ENCODE measurements at regions of chr19 and their contacts with region 1.

Region 1: DNA sequence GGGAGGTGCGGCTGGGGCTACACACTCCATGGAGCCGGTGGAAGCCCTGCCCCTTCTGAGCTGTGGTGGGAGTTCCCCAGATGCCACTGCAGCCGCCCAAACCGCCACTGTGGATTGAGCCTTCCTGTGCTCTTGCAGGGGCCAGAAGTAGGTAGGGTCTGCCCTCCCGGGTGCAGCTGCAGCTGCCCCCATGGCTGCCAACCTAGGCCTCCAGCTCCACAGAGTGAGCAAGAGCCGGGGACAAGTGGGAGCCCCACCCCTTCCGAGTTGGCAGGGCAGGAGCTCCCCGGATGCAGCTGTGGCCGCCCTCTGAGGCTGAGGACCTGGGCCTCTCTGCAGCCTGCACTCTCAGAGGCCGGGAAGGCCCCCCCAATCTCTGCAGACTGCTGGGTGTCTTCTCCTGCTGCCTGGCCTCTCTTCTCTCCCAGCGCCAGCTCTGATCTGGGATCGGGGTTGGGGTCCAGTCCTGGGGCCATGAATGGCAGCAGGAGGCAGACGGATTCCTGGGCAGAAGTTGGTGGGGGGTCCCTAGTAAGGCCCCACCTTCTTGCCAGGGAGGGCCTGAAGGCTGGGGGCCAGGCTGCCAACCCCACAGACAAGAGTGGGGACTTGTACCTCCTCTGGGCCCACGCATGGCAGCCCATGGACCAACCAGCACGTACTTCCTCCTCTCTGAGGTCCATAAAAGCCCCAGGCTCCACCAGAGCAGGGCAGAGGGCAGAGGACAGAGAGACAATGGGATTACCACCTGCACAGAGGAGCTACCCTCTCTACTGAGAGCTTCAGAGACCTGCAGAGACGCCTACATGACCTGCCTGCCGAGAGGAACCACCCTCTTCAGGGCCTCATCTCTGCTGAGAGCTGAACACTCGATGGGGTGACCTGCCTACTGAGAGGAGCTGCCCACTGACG is 28.9 kb downstream of the AP2S1 start:
- DNase-seq: no peak
- ATAC-seq: no peak
- H3K4me3 ChIP-seq: no peak overlapping the region
- H3K27ac ChIP-seq: no peak overlapping the region
- H3K4me1 ChIP-seq: peaks cover 14% of the 10 kb centered on the region
- H3K27me3 ChIP-seq: no peaks in the 10 kb centered on the region
- CTCF ChIP-seq: no peak

Region 2: DNA sequence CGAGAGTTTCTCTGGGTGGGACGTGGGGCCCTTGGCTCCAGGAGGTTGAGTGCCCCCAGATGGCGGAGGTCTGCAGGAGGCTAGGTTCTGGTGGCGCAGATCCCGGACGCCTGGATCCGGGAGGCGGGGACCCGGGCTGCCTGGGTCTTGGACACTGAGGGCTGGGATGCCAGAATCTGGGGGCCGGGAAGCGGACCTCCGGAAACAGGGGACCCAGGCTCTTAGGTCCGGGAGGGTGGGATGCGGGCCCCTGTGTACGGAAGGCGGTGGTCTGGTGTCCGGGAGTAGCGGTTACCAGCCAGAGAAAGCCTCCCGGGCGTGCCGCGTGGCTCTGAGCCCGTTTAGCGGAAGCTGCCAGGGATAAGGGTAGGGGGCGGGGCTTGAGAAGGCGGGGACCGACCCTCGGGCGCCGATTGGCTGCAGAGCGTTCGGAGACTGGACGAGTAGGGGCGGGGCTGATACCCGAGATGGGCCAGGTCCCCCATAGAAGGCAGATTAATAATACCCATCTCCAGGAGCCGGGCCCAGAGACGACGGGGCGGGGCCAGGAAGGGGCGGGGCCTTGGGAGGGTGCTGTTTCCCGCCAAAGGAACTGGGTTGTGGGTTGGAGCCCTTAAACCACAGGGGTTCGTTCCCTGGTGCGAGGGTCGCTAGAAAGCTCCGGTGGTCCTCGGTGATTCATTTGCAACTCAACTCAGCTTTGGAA is 33.3 kb before region 1 on chr19 and contains the start of gene SLC1A5:
- CTCF ChIA-PET with region 1: no interaction called
- POLR2A ChIA-PET with region 1: no interaction called
- intact Hi-C with region 1: loop called (anchors 5 kb)
- DNase-seq: peak; percentile 93
- ATAC-seq: peak; percentile 59
- H3K4me3 ChIP-seq: peak within 1 kb of the TSS; percentile 91
- H3K27ac ChIP-seq: peak within 1 kb of the TSS; percentile 86
- H3K4me1 ChIP-seq: peaks cover 35% of the 10 kb centered on the region
- H3K27me3 ChIP-seq: no peaks in the 10 kb centered on the region
- CTCF ChIP-seq: no peak
- total RNA-seq, gene SLC1A5: 97.4 and 117 TPM in 2 replicates

Measured in PC-3 (cell line).